CD8-positive, alpha-beta memory T cell (primary cell): ENCODE measurements at regions of chr3 and their contacts with region 1.

Region 1: DNA sequence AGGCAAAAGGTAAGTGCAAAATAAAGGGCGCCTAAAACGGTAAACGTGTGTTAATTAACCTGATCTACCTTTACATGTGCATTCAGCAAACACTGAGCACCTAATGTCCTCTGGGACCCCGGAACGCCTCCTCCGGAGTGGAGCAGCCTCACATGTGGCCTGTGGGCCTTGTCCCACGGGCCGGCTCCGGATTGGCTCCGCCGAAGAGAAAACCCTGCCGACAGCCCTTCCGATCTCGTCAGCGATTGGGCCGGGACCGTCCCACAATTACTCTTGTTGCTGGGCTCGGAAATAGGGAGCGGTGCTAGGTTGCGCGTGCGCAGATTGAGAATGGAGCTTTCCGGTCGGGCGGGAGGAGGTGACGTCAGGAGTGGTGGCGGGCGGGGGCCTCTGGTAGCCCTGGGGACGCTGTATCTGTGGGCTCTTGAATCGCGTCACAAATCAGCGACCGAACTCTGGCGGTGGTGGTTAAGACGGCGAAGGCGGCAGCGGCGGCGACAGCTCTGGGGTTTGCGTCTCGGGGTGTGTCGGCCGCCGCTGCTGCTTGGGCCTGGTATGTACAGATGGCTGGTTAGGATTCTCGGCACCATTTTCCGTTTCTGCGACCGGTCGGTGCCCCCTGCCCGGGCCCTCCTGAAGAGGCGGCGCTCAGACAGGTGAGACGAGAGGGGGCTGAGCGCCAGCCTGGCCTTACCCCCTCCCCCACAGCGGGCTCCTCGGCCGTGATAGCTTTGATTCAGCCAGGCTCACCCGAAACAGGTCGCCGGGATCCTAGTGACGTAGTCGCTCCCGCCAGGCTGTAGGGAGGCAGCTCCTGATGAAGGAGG is at the start of gene SENP2:
- DNase-seq: peak; percentile 98 to 100 (median 100)
- H3K4me3 ChIP-seq: peak within 1 kb of the TSS; percentile 93
- H3K4me3 Mint-ChIP-seq: peak within 1 kb of the TSS; percentile 84 to 94 (median 90)
- H3K27ac ChIP-seq: peak within 1 kb of the TSS; percentile 97
- H3K27ac Mint-ChIP-seq: peak within 1 kb of the TSS; percentile 92 to 98 (median 96)
- H3K4me1 ChIP-seq: peaks cover 31% of the 10 kb centered on the region
- H3K4me1 Mint-ChIP-seq: peaks cover 42 to 56% (median 42%) of the 10 kb centered on the region in 3 donors
- H3K27me3 ChIP-seq: no peaks in the 10 kb centered on the region
- H3K27me3 Mint-ChIP-seq: peaks cover 0 to 6% of the 10 kb centered on the region in 2 donors
- total RNA-seq, gene SENP2: 41.2 to 41.5 TPM

Region 2: GRCh38 chr3:185527364-185527763 is 58.7 kb before region 1 on chr3:
- CTCF ChIA-PET with region 1: no interaction called
- POLR2A ChIA-PET with region 1: no interaction called
- DNase-seq: no peak
- H3K4me3 ChIP-seq: no peak overlapping the region
- H3K4me3 Mint-ChIP-seq: no peak overlapping the region
- H3K27ac ChIP-seq: no peak overlapping the region
- H3K27ac Mint-ChIP-seq: no peak overlapping the region
- H3K4me1 ChIP-seq: no peaks in the 10 kb centered on the region
- H3K4me1 Mint-ChIP-seq: no peaks in the 10 kb centered on the region
- H3K27me3 ChIP-seq: no peaks in the 10 kb centered on the region
- H3K27me3 Mint-ChIP-seq: peaks cover 9 to 17% of the 10 kb centered on the region in 2 donors

Region 3: GRCh38 chr3:185558395-185558794 is 27.7 kb before region 1 on chr3:
- CTCF ChIA-PET with region 1: interaction called, 10 read pairs
- POLR2A ChIA-PET with region 1: interaction called, 9 read pairs
- DNase-seq: no peak
- H3K4me3 ChIP-seq: no peak overlapping the region
- H3K4me3 Mint-ChIP-seq: peak overlapping the region in 1 of 7 donors; percentile 3
- H3K27ac ChIP-seq: peak overlapping the region; percentile 11
- H3K27ac Mint-ChIP-seq: no peak overlapping the region
- H3K4me1 ChIP-seq: no peaks in the 10 kb centered on the region
- H3K4me1 Mint-ChIP-seq: peaks cover 11 to 13% (median 12%) of the 10 kb centered on the region in 3 donors
- H3K27me3 ChIP-seq: no peaks in the 10 kb centered on the region
- H3K27me3 Mint-ChIP-seq: peaks cover 25% of the 10 kb centered on the region in 2 donors

Region 4: DNA sequence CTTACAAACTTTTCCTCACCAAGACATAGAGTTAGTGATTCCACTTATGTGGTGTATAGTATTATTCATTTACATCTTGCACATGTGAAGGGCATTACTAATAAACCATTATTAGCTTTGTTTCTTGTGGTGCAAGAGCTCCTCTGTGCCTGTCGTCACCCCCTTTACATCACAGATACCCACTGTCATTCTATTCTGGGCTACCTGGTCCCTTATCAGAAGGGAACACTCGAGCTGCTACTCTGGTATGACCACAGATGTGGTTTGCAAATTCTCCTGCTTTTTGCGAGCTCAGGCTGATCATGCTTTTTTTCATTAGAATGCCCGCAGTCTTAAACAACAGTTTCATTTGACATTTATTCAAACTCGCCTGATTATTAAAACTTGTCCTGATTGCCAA is 13.9 kb before region 1 on chr3:
- CTCF ChIA-PET with region 1: interaction called, 15 read pairs
- POLR2A ChIA-PET with region 1: interaction called, 3 read pairs
- DNase-seq: no peak
- H3K4me3 ChIP-seq: no peak overlapping the region
- H3K4me3 Mint-ChIP-seq: peak overlapping the region in 1 of 7 donors; percentile 51
- H3K27ac ChIP-seq: no peak overlapping the region
- H3K27ac Mint-ChIP-seq: no peak overlapping the region
- H3K4me1 ChIP-seq: no peaks in the 10 kb centered on the region
- H3K4me1 Mint-ChIP-seq: peaks cover 6% of the 10 kb centered on the region in 3 donors
- H3K27me3 ChIP-seq: no peaks in the 10 kb centered on the region
- H3K27me3 Mint-ChIP-seq: peaks cover 1 to 8% of the 10 kb centered on the region in 2 donors